ENCODE measurements at regions of chr11 and their contacts with region 1.

Region 1: GRCh38 chr11:65817835-65818742 is 15.7 kb upstream of the SNX32 start:
- DNase-seq: peak; percentile 53 to 99
- H3K4me3 ChIP-seq: peak overlapping the region; percentile 41 to 74 (median 67)
- H3K27ac ChIP-seq: no peak overlapping the region
- H3K4me1 ChIP-seq: no peaks in the 10 kb centered on the region
- H3K27me3 ChIP-seq: peaks cover 0 to 11% (median 4%) of the 10 kb centered on the region in 4 experiments; a peak in 4 of 7 replicates
- CTCF ChIP-seq: peak; percentile 99 to 100 (median 99)
- EP300 ChIP-seq: peak in 1 of 2 experiments; percentile 28; a peak in 1 of 3 replicates
- POLR2A ChIP-seq: no peak
- RAD21 ChIP-seq: peak; percentile 91 to 95

Region 2: DNA sequence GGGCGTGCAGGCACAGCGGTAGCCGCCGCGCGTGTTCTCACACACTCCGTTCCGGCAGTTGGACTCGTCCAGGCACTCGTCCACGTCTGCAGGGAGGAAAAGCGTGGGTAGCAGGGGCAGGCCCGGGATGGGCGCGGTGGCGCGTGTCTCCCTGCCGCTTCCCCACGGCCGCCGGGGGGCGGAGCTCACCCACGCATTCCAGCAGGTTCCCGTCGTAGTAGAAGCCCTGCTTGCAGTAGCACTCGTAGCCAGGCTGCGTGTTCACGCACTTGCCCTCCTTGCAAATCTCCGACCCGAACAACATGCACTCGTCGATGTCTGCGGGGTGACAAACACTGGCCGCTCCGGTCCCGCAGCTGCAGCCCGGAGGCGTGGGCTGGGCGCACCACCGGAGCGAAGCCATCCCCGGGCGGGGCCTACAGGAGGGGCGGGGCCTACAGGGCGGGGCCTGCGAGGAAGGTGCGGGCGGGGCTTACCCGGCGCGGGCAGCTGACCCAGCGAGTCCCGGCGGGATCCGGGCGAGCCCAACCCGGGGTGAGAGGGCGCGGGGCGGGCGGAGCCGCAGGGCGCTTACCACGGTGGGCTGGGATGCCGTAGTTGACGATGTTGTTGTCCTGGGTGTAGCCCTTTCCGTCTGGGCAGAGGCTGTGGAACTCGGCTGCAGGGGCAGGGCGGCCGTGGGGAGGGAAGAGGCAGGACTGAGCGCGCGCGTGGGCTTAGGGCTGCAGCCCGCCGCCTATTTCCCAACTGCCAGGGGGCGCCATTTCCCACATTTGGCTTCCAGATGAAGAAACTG is 277.6 kb before region 1 on chr11:
- CTCF ChIA-PET with region 1: no interaction called
- POLR2A ChIA-PET with region 1: no interaction called
- DNase-seq: peak in 1 of 2 experiments; percentile 98
- H3K4me3 ChIP-seq: peak overlapping the region; percentile 32 to 68 (median 46)
- H3K27ac ChIP-seq: no peak overlapping the region
- H3K4me1 ChIP-seq: peaks cover 0 to 9% (median 1%) of the 10 kb centered on the region in 4 experiments; a peak in 5 of 7 replicates
- H3K27me3 ChIP-seq: peaks cover 0 to 38% (median 21%) of the 10 kb centered on the region in 4 experiments; a peak in 6 of 7 replicates
- CTCF ChIP-seq: peak in 2 of 3 experiments; percentile 75 to 88; a peak in 3 of 4 replicates
- EP300 ChIP-seq: no peak
- POLR2A ChIP-seq: no peak; a peak in 1 of 3 replicates
- RAD21 ChIP-seq: peak; percentile 74 to 81

Region 3: DNA sequence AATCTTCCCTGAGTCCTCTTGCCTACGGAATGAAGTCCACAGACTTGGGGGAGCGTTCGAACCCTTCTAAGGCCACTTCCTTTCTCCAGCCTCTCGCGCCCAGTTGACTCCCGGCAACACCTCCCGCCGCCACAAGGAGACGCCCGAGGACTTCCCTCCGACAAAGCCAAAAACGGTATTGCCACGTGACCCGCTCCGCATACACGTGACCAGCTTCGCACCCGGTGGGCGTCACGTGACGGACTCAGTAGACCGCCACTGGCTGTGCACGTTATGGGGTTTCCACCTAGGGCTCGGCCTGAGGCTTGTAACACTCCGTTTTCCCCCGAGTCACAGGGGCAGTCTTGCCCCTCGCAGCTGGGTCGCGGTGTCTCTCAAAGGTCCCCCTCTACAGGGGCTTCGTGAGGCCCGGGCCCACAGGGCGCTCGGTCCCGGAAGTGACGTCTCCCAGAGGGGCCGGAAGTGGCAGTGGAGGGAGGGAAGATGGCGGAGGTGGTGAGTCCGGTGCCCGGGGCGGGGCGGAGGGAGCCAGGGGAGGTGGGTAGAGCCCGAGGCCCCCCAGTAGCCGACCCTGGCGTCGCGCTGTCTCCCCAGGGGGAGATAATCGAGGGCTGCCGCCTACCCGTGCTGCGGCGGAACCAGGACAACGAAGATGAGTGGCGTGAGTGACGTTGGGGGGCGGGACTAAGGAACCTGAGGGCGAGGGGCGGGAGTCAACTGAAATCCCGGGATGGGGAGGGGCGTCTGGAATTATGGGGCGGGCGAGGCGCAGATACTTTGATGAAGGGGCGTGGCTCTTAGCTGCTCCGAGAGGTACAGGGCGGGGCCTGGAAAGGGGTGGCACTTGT is 106.1 kb before region 1 on chr11 and contains the start of gene KAT5:
- CTCF ChIA-PET with region 1: interaction called, 33 read pairs
- POLR2A ChIA-PET with region 1: interaction called, 4 read pairs
- DNase-seq: peak; percentile 91 to 100
- H3K4me3 ChIP-seq: peak within 1 kb of the TSS; percentile 62 to 87 (median 74)
- H3K27ac ChIP-seq: peak within 1 kb of the TSS; percentile 99
- H3K4me1 ChIP-seq: peaks cover 0 to 2% (median 2%) of the 10 kb centered on the region in 4 experiments; a peak in 1 of 7 replicates
- H3K27me3 ChIP-seq: no peaks in the 10 kb centered on the region
- CTCF ChIP-seq: peak; percentile 95 to 96 (median 95)
- EP300 ChIP-seq: 0 out of 3 replicates have a peak, but pooled peaks of 1 of the 2 experiments have one; percentile 60
- POLR2A ChIP-seq: peak; percentile 86 to 88
- RAD21 ChIP-seq: peak; percentile 94 to 96
- total RNA-seq, gene KAT5: 36.4 and 37.4 TPM in 2 replicates

Region 4: DNA sequence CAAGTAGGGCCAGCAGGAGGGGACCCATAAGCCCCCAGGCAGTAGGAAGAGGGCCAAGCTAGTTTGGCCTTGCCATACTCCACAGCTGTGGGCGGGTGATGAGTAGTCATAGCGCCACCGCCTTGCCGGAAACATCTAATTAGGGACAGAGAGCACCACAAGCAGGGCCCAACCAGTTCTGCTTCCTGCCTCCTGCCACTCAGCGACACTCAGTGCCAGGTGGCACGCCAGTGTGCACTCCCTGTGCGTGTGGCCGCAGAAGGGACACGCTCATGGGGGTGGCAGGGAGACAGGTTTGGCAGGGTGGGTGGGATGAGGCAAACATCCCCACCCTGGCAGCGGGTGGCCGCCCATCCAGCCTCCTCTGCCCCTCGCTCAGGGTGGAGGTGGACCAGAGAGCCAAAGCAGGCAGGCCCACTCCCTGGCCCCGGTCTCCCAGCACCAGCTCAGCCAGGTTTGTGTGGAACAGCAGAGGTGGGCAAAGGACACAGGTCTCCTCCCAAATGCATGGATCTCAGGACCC is 26.3 kb before region 1 on chr11:
- CTCF ChIA-PET with region 1: interaction called, 109 read pairs
- POLR2A ChIA-PET with region 1: interaction called, 5 read pairs
- DNase-seq: no peak
- H3K4me3 ChIP-seq: no peak overlapping the region
- H3K27ac ChIP-seq: no peak overlapping the region
- H3K4me1 ChIP-seq: peaks cover 14 to 25% (median 22%) of the 10 kb centered on the region in 4 experiments
- H3K27me3 ChIP-seq: peaks cover 5 to 22% (median 18%) of the 10 kb centered on the region in 4 experiments
- CTCF ChIP-seq: no peak
- EP300 ChIP-seq: no peak
- POLR2A ChIP-seq: no peak
- RAD21 ChIP-seq: no peak

Region 5: GRCh38 chr11:65796726-65797601 is 21.1 kb before region 1 on chr11:
- CTCF ChIA-PET with region 1: interaction called, 109 read pairs
- POLR2A ChIA-PET with region 1: no interaction called
- DNase-seq: no peak
- H3K4me3 ChIP-seq: no peak overlapping the region
- H3K27ac ChIP-seq: no peak overlapping the region
- H3K4me1 ChIP-seq: peaks cover 0 to 21% (median 5%) of the 10 kb centered on the region in 4 experiments; a peak in 5 of 7 replicates
- H3K27me3 ChIP-seq: no peaks in the 10 kb centered on the region
- CTCF ChIP-seq: no peak
- EP300 ChIP-seq: no peak
- POLR2A ChIP-seq: no peak
- RAD21 ChIP-seq: 0 out of 4 replicates have a peak, but pooled peaks of 1 of the 2 experiments have one; percentile 6

Region 6: DNA sequence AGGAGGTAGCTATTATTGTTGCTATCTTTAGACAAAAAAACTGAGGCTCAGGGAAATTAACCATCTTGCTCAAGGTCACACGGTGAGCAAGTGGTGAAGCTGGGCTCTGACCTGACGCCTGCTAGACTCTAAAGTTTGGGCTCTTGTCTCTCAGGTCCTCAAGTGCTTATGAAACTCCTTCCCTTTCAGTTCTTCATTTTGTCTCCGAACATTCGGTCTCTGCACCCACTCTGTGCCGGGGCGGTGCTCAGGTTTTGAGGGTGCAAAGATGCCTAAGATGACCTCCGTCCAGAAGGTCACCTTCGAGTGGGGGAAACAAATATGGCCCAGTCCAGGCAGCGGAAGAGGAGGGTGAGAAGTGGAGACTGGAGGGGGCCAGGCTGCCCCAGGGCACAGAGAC is 15.2 kb before region 1 on chr11:
- CTCF ChIA-PET with region 1: interaction called, 42 read pairs
- POLR2A ChIA-PET with region 1: interaction called, 5 read pairs
- DNase-seq: no peak
- H3K4me3 ChIP-seq: no peak overlapping the region
- H3K27ac ChIP-seq: no peak overlapping the region
- H3K4me1 ChIP-seq: peaks cover 0 to 14% (median under 1%) of the 10 kb centered on the region in 4 experiments; a peak in 2 of 7 replicates
- H3K27me3 ChIP-seq: no peaks in the 10 kb centered on the region; a peak in 1 of 7 replicates
- CTCF ChIP-seq: no peak
- EP300 ChIP-seq: no peak
- POLR2A ChIP-seq: no peak
- RAD21 ChIP-seq: no peak